ENCODE measurements at regions of chr1 and their contacts with region 1.

Region 1: GRCh38 chr1:161738627-161739287 is 10.8 kb upstream of the DUSP12 start:
- DNase-seq: peak; percentile 93
- ATAC-seq: peak; percentile 89
- H3K4me3 ChIP-seq: no peak overlapping the region
- H3K27ac ChIP-seq: peak overlapping the region; percentile 83
- H3K4me1 ChIP-seq: peaks cover 62% of the 10 kb centered on the region
- H3K27me3 ChIP-seq: no peaks in the 10 kb centered on the region
- CTCF ChIP-seq: peak; percentile 57 to 83 (median 78)
- EP300 ChIP-seq: 0 out of 4 replicates have a peak, but pooled peaks of 1 of the 2 experiments have one; percentile 5
- POLR2A ChIP-seq: peak; percentile 56
- RAD21 ChIP-seq: peak; percentile 95

Region 2: DNA sequence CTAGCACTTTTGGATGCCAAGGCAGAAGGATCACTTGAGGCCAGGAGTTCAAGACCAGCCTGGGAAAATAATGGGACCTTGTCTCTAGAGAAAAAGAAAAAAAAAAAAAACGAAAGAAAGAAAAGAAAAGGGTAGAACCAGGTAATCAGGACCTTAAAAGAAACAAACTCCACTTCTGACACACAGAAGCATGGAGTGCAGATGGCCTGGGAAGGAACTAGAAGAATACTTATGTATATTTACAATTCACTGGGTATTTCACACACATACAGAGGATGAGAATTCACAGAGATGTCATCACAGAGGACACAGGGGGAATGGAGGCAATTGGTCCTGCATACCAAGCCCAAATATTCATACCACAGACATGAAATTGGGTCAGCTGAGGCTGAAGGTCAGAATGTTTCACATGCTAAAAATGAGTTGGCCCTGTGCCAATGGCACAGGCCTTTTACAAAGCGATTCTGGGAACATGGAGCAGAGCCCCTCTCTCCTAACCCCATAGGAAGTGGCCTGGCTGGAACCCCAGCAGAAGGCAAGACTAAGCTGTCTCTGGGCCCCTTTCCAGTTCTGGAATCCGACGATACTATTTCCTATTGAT is 565.9 kb before region 1 on chr1:
- CTCF ChIA-PET with region 1: no interaction called
- POLR2A ChIA-PET with region 1: no interaction called
- RAD21 ChIA-PET with region 1: no interaction called
- SMC1A ChIA-PET with region 1: no interaction called
- in situ Hi-C with region 1: no loop called
- intact Hi-C with region 1: no loop called
- DNase-seq: no peak
- ATAC-seq: no peak
- H3K4me3 ChIP-seq: no peak overlapping the region
- H3K27ac ChIP-seq: no peak overlapping the region
- H3K4me1 ChIP-seq: peaks cover 17% of the 10 kb centered on the region
- H3K27me3 ChIP-seq: no peaks in the 10 kb centered on the region
- CTCF ChIP-seq: no peak
- EP300 ChIP-seq: no peak
- POLR2A ChIP-seq: no peak
- RAD21 ChIP-seq: no peak

Region 3: DNA sequence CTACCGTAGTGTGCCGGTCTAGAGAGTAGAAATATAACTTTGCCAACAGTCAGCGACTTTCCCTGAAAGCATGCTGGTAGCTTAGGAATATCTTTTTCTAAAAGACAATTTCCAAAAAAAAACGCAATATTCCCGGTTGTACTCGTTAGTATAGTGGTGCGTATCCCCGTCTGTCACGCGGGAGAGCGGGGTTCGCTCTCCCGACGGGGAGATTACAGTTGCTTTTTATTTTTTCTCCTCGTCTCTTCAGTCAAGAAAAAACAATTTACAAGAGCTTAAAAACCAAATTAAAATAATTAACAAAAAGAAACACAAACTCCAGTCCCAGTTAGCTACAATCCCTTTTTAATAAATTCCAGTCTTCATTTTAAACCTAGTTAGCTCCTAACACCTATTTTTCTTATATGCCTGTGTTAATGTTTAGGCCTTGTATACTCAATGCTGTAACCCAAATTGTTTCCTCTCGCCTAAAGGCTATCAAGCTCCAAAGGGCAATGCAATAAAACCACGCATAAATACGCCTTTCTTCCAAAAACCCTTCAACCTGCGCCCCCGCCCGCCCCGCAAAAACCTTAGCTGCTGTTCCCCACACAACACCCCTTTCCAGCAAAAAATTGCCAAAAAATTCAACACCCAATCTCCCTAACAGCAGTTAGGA is 206.6 kb before region 1 on chr1:
- CTCF ChIA-PET with region 1: interaction called, 6 read pairs
- POLR2A ChIA-PET with region 1: no interaction called
- RAD21 ChIA-PET with region 1: interaction called, 10 read pairs
- SMC1A ChIA-PET with region 1: interaction called, 9 read pairs
- in situ Hi-C with region 1: no loop called
- intact Hi-C with region 1: no loop called
- DNase-seq: no peak
- ATAC-seq: no peak
- H3K4me3 ChIP-seq: no peak overlapping the region
- H3K27ac ChIP-seq: no peak overlapping the region
- H3K4me1 ChIP-seq: no peaks in the 10 kb centered on the region; the same call in 1 of the 2 replicates
- H3K27me3 ChIP-seq: no peaks in the 10 kb centered on the region
- CTCF ChIP-seq: no peak
- EP300 ChIP-seq: no peak
- POLR2A ChIP-seq: no peak
- RAD21 ChIP-seq: no peak

Region 4: GRCh38 chr1:161691846-161692245 is 46.9 kb before region 1 on chr1:
- CTCF ChIA-PET with region 1: interaction called, 21 read pairs
- POLR2A ChIA-PET with region 1: no interaction called
- RAD21 ChIA-PET with region 1: no interaction called
- SMC1A ChIA-PET with region 1: interaction called, 3 read pairs
- in situ Hi-C with region 1: no loop called
- intact Hi-C with region 1: no loop called
- DNase-seq: no peak
- ATAC-seq: no peak
- H3K4me3 ChIP-seq: no peak overlapping the region
- H3K27ac ChIP-seq: no peak overlapping the region
- H3K4me1 ChIP-seq: no peaks in the 10 kb centered on the region
- H3K27me3 ChIP-seq: no peaks in the 10 kb centered on the region
- CTCF ChIP-seq: no peak
- EP300 ChIP-seq: no peak
- POLR2A ChIP-seq: no peak
- RAD21 ChIP-seq: no peak

Region 5: GRCh38 chr1:161726596-161727457 is 11.9 kb before region 1 on chr1:
- CTCF ChIA-PET with region 1: interaction called, 86 read pairs
- POLR2A ChIA-PET with region 1: interaction called, 34 read pairs
- RAD21 ChIA-PET with region 1: interaction called, 85 read pairs
- SMC1A ChIA-PET with region 1: interaction called, 84 read pairs
- in situ Hi-C with region 1: no loop called
- intact Hi-C with region 1: no loop called
- DNase-seq: no peak
- ATAC-seq: peak; percentile 80
- H3K4me3 ChIP-seq: peak overlapping the region; percentile 92
- H3K27ac ChIP-seq: peak overlapping the region; percentile 84
- H3K4me1 ChIP-seq: peaks cover 42% of the 10 kb centered on the region
- H3K27me3 ChIP-seq: no peaks in the 10 kb centered on the region
- CTCF ChIP-seq: 0 out of 6 replicates have a peak, but pooled peaks of 1 of the 3 experiments have one; percentile 8
- EP300 ChIP-seq: no peak
- POLR2A ChIP-seq: peak; percentile 94
- RAD21 ChIP-seq: no peak

Region 6: DNA sequence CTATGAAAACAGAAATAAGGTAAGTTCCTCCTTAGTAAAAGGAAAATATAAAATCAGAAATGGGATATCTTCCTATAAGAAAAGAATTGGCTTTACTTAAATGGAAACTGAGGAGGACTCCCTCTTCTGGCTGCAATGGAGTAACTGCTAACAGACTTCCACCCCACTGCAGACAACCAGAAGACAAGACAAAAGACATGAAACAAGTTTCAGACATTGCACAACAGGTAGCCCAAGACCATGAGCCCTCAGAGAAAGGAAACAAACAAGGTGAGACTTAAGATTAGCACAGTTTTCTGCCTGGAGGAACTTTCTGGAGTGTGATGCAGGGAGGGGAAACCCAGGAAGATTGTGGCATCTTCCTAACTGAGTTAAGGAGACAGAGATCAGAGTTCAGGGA is 301.9 kb after region 1 on chr1:
- CTCF ChIA-PET with region 1: interaction called, 21 read pairs
- POLR2A ChIA-PET with region 1: no interaction called
- RAD21 ChIA-PET with region 1: interaction called, 17 read pairs
- SMC1A ChIA-PET with region 1: interaction called, 8 read pairs
- in situ Hi-C with region 1: no loop called
- intact Hi-C with region 1: no loop called
- DNase-seq: no peak
- ATAC-seq: peak; percentile 32; the same call in 1 of the 3 replicates
- H3K4me3 ChIP-seq: no peak overlapping the region
- H3K27ac ChIP-seq: no peak overlapping the region
- H3K4me1 ChIP-seq: no peaks in the 10 kb centered on the region
- H3K27me3 ChIP-seq: no peaks in the 10 kb centered on the region
- CTCF ChIP-seq: peak; percentile 24 to 36 (median 30); a peak in 3 of 6 replicates
- EP300 ChIP-seq: no peak
- POLR2A ChIP-seq: no peak
- RAD21 ChIP-seq: no peak